ENCODE measurements at regions of chr22 and their contacts with region 1.

Region 1: DNA sequence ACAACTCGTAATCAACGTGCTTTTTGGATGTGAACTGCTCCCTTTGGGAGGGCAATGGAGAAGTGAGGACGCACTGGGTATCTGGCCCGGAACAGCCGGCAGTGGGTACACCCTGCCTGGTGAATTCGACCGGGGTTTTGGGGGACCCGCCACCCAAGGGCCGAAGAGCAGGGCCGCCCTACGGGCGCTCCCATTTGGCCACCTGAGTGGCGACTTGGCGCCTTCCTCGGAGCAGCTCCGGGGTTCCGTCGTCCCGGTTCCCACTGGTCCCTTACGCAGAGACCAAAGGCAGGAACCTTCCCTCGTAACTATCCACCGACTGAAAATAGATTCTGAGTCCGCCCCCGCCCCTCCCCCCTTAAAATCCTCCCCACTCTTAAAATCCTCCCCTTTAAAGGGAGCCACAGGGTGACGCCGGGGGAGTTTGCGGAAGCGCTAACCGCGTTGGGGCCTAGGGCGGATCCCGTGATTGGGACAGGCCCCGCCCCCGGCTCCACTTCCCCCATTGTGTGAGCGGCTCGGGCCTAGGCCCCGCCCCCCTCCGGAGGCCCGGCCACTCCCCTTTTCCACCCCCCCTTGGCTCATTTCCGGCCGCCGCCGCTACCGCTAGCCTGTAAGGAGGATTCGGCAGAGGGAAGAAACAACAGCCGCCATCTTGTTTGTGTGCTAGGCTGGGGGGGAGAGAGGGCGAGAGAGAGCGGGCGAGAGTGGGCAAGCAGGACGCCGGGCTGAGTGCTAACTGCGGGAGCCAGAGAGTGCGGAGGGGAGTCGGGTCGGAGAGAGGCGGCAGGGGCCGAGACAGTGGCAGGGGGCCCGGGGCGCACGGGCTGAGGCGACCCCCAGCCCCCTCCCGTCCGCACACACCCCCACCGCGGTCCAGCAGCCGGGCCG is 1.0 kb upstream of the EP300 start:
- DNase-seq: peak; percentile 98 to 100 (median 99)
- ATAC-seq: peak; percentile 94
- H3K4me3 ChIP-seq: peak overlapping the region; percentile 82 to 91
- H3K27ac ChIP-seq: peak overlapping the region; percentile 100
- H3K4me1 ChIP-seq: peaks cover 8 to 30% of the 10 kb centered on the region in 2 donors
- H3K27me3 ChIP-seq: no peaks in the 10 kb centered on the region
- CTCF ChIP-seq: peak in 1 of 2 donors; percentile 17

Region 2: GRCh38 chr22:40808018-40808841 is 283.1 kb before region 1 on chr22:
- intact Hi-C with region 1: no loop called
- DNase-seq: peak in 1 of 4 donors; percentile 5
- ATAC-seq: peak; percentile 67
- H3K4me3 ChIP-seq: no peak overlapping the region
- H3K27ac ChIP-seq: no peak overlapping the region
- H3K4me1 ChIP-seq: peaks cover 0 to 10% of the 10 kb centered on the region in 2 donors
- H3K27me3 ChIP-seq: no peaks in the 10 kb centered on the region
- CTCF ChIP-seq: no peak

Region 3: GRCh38 chr22:40950962-40951794 is 140.2 kb before region 1 on chr22 and contains the start of gene RBX1:
- intact Hi-C with region 1: loop called in 1 of 2 experiments (anchors 10 kb)
- DNase-seq: peak; percentile 99 to 100 (median 100)
- ATAC-seq: peak; percentile 94
- H3K4me3 ChIP-seq: peak within 1 kb of the TSS; percentile 83 to 84
- H3K27ac ChIP-seq: peak within 1 kb of the TSS; percentile 95 to 97
- H3K4me1 ChIP-seq: peaks cover 7 to 34% of the 10 kb centered on the region in 2 donors
- H3K27me3 ChIP-seq: no peaks in the 10 kb centered on the region
- CTCF ChIP-seq: no peak
- polyA plus RNA-seq, gene RBX1: 67.3 to 75.8 (median 69.3) TPM